Dorsolateral prefrontal cortex (tissue), 120 donors: ENCODE measurements at regions of chr1 and their contacts with region 1.

Region 1: GRCh38 chr1:74205266-74205665 is 7.2 kb downstream of the FPGT start:
- DNase-seq: no peak
- H3K4me3 ChIP-seq: no peak overlapping the region
- H3K27ac ChIP-seq: peak overlapping the region in 1 of 59 donors; percentile 6
- H3K27me3 ChIP-seq: no peaks in the 10 kb centered on the region
- CTCF ChIP-seq: no peak

Region 2: GRCh38 chr1:74356493-74356892 is 151.2 kb after region 1 on chr1:
- intact Hi-C with region 1: no loop called
- DNase-seq: no peak
- H3K4me3 ChIP-seq: peak overlapping the region in 6 of 59 donors; percentile 39 to 68 (median 58)
- H3K27ac ChIP-seq: peak overlapping the region in 5 of 59 donors; percentile 9 to 27 (median 13)
- H3K27me3 ChIP-seq: no peaks in the 10 kb centered on the region
- CTCF ChIP-seq: no peak

Region 3: DNA sequence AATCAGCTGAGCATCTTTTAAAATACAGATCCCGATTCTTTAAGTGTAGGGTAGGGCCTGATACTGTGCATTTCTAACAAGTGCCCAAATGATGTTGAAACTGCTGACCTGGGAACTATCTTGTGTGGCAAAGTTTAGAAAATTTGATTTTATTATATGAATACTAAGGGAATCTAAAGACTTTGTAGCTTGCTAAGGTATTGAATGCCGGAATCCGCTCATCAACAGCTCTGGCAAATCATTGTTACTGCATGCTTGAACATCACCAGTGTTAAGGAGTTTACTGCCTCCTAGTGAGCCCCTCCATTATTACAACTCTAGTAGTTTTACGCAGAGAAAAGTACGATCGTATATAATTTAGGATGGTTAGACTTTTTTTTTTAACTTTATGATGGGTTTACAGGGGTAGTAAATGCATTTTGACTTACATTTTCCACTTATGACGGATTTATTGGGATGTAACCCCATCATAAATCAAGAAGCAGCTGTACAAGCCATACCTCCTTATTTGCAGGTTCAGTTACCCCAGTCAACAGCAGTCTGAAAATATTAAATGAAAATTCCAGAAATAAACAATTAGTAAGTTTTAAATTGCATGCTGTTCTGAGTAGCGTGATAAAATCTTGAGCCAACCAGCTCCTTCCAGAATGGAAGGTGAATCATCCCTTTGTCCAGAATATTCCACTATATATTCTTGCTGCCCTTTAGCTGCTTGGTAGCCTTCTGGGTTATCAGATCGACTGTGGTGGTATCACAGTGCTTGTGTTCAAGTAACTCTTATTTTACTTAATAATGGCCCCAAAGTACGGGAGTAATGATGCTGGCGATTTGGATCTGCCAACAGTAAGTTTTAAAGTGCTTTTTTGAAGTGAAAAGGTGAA is 528.6 kb after region 1 on chr1:
- intact Hi-C with region 1: loop called in 1 of 2 experiments (anchors 10 kb)
- DNase-seq: peak in 3 of 10 donors; percentile 9 to 48 (median 36)
- H3K4me3 ChIP-seq: peak overlapping the region; percentile 52 to 93 (median 80)
- H3K27ac ChIP-seq: peak overlapping the region; percentile 54 to 97 (median 91)
- H3K27me3 ChIP-seq: no peaks in the 10 kb centered on the region
- CTCF ChIP-seq: peak; percentile 53 to 85 (median 73)